ENCODE measurements at regions of chr6 and their contacts with region 1.

Region 1: GRCh38 chr6:142207265-142207877 is 60.3 kb downstream of the VTA1 start:
- DNase-seq: peak; percentile 30
- H3K4me3 ChIP-seq: peak overlapping the region in 1 of 2 experiments; percentile 49; a peak in 1 of 4 replicates
- H3K27ac ChIP-seq: no peak overlapping the region
- H3K4me1 ChIP-seq: no peaks in the 10 kb centered on the region
- H3K27me3 ChIP-seq: no peaks in the 10 kb centered on the region
- CTCF ChIP-seq: peak; percentile 65
- EP300 ChIP-seq: no peak
- RAD21 ChIP-seq: peak; percentile 79

Region 2: DNA sequence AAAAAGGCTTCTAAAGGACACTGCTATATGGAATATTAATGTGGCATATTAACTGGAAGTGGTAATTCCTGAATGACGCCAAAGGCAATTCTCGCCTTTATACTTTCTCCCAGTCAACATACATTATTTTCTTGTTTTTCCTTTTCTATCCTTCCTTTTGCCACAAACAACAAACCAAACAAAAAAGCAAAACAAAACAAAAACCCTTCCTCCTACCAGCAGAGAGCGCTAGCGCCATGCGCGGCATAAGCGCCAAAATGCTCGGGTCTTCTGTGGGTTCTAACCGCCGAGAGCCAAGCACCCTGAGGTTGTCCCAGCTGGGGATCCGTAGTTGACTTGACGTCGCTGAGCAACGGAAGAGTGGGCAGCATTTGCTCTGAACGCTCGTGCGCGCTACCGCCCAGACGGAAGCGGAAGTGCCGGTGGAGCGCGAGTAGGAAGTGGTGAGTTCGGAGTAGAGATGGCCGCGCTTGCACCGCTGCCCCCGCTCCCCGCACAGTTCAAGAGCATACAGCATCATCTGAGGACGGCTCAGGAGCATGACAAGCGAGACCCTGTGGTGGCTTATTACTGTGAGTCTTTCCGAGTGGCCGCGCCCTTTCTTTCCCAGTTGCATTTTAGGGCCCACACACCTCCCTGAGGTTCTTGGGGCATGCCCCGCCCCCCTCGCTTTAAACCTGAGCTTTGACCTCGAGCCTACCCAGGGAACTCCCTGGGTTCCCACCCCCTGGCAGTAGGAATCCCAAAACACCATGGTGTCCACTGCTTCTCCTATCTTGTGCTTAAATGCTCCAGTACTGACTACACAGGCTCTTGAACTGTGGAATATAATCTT is 60.3 kb before region 1 on chr6 and contains the starts of genes NMBR and VTA1:
- CTCF ChIA-PET with region 1: interaction called, 25 read pairs
- POLR2A ChIA-PET with region 1: no interaction called
- DNase-seq: peak; percentile 79
- H3K4me3 ChIP-seq: peak within 1 kb of the TSS; percentile 94 to 98
- H3K27ac ChIP-seq: peak within 1 kb of the TSS; percentile 63 to 76
- H3K4me1 ChIP-seq: peaks cover 8 to 10% of the 10 kb centered on the region in 2 experiments; a peak in 3 of 4 replicates
- H3K27me3 ChIP-seq: no peaks in the 10 kb centered on the region
- CTCF ChIP-seq: peak; percentile 93
- EP300 ChIP-seq: peak; percentile 22 to 45; a peak in 1 of 4 replicates
- RAD21 ChIP-seq: peak; percentile 84
- polyA plus RNA-seq, gene NMBR: not detected in 2 replicates
- polyA plus RNA-seq, gene VTA1: 60.1 and 84.3 TPM in 2 replicates

Region 3: DNA sequence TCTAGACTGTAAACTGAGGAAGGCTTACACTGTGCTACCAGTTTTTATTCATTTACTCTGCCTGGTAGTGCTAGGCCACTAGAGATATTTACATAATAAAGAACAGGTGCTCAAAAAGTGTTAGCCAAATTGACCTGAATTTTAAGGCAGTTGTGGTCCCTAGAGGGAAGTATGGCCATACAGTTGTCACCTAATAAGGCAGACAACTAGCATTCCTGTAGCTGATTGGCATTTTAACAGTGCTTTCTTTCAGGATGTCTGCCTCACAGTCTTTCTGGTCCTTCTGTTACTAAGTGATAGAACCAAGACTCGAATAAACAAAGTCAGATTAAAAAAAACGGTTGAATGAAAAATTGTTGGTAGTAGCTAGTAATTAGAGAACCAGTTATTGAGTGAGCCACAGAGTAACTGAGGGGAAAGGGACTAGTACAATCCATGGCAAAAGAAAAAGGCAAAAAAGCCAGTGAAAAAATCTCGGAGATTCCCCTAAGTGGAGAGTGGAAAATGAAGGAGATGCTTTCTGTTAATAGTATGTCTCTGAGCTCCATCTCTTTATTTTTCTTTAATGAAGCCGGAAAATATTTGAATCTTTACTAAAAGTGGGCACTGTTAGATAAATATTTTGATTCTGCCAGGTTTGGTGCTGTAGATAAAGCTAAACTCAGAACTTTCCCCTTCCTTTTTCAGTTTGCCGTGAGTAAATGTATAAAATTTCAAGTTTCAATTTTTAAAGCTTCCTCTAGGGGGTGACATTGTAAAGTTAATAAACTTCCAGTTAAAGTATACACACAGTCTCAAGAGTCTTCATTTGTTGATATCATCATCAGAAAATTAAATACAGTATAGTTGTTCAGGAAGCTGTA is 51.2 kb before region 1 on chr6:
- CTCF ChIA-PET with region 1: interaction called, 22 read pairs
- POLR2A ChIA-PET with region 1: no interaction called
- DNase-seq: peak; percentile 10
- H3K4me3 ChIP-seq: no peak overlapping the region
- H3K27ac ChIP-seq: peak overlapping the region; percentile 43 to 44; a peak in 3 of 4 replicates
- H3K4me1 ChIP-seq: no peaks in the 10 kb centered on the region; a peak in 3 of 4 replicates
- H3K27me3 ChIP-seq: no peaks in the 10 kb centered on the region
- CTCF ChIP-seq: peak; percentile 64
- EP300 ChIP-seq: no peak
- RAD21 ChIP-seq: peak; percentile 57

Region 4: DNA sequence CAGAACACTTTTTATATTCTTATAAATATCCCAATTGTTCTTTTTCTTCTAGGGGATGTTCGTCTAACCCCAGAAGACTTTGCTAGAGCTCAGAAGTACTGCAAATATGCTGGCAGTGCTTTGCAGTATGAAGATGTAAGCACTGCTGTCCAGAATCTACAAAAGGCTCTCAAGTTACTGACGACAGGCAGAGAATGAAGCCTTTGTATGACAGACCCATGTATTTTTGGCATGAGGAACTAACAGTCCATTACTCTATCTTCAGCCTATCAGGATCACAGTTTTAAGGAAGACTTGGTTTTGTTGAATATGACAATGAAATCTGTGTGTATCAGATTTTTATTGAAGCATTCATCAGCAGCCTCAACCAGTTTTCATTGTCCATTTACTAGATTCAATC is 11.1 kb after region 1 on chr6:
- CTCF ChIA-PET with region 1: interaction called, 10 read pairs
- POLR2A ChIA-PET with region 1: no interaction called
- DNase-seq: no peak
- H3K4me3 ChIP-seq: no peak overlapping the region
- H3K27ac ChIP-seq: no peak overlapping the region
- H3K4me1 ChIP-seq: no peaks in the 10 kb centered on the region
- H3K27me3 ChIP-seq: no peaks in the 10 kb centered on the region
- CTCF ChIP-seq: no peak
- EP300 ChIP-seq: no peak
- RAD21 ChIP-seq: no peak

Measured in SK-N-SH (cell line).